RWPE1 (cell line): ENCODE measurements at regions of chr11 and their contacts with region 1.

Region 1: DNA sequence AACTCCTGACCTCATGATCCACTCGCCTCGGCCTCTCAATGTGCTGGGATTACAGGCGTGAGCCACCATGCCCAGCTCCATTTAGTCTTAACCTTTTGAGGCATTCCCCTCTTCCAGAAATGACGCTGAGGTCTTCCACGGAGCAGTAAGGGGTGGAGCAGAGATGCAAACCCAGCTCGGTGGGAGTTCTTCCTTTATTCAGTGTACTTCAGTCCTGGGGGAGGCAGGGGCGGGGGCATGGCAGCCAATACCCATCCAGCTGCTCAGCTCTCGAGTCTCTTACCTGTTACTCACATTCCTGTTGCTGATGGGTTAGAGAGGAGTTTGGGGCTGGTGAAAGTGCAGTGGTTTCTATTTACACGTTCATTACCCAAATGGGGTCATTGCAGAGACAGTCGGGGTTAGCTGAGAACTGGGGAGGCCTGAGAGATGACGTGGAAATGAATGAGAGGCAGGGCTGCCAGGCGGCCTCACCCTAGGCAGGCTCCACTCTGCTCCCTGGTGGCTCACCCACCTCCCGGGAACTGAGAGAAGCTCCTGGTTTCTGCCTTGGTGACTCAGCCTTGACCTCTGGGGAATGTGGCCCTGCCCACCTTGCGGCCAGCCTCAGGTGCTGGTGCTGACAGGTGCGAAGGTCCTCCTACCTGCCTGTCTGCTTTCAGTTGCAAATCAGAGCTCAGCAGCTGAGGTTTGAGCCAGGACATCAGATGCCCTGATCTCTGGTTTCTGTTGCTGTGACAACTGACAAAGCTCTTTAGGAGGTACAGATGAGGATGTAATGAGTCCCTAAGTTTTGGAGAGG is 13.4 kb upstream of the ST14 start:
- DNase-seq: peak; percentile 93
- H3K27ac ChIP-seq: peak overlapping the region; percentile 49
- CTCF ChIP-seq: no peak

Region 2: GRCh38 chr11:129930296-129930695 is 215.9 kb before region 1 on chr11:
- CTCF ChIA-PET with region 1: interaction called, 10 read pairs
- POLR2A ChIA-PET with region 1: no interaction called
- DNase-seq: peak; percentile 59
- H3K27ac ChIP-seq: peak overlapping the region; percentile 58
- CTCF ChIP-seq: no peak

Region 3: GRCh38 chr11:130022798-130023583 is 123.2 kb before region 1 on chr11:
- CTCF ChIA-PET with region 1: no interaction called
- POLR2A ChIA-PET with region 1: no interaction called
- DNase-seq: peak; percentile 76
- H3K27ac ChIP-seq: peak overlapping the region; percentile 51; the same call in 1 of the 2 replicates
- CTCF ChIP-seq: no peak

Region 4: GRCh38 chr11:130159657-130160497 is 13.7 kb after region 1 on chr11 and contains the start of gene ST14:
- CTCF ChIA-PET with region 1: interaction called, 14 read pairs
- POLR2A ChIA-PET with region 1: interaction called, 5 read pairs
- DNase-seq: peak; percentile 79
- H3K27ac ChIP-seq: no peak within 1 kb of the TSS
- CTCF ChIP-seq: no peak